ENCODE measurements at regions of chr17 and their contacts with region 1.

Region 1: GRCh38 chr17:39621523-39622379 is 5.0 kb upstream of the PPP1R1B start:
- DNase-seq: peak; percentile 80 to 97 (median 91)

Region 2: DNA sequence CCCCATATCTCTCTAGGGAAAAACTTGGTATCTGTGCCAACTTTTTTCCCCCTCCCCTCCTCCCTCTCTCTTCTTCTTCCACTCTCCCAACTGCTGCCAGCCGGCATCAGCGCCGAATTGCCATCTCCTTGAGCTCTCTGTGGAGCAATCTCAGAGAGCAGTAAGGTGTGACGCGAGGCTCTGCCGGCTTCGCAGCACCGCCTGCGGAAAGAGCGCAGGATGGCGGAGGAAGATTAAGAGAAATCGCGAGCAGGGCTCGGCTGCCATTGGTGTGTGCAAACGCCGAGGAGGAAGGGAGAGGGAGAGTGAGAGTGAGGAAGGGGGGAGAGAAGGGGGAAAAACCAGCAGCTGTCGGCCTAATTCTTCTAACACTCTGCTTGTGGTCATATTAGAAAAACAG is 58.3 kb before region 1 on chr17:
- intact Hi-C with region 1: no loop called
- DNase-seq: peak in 41 of 42 donors; percentile 24 to 85 (median 64)

Region 3: GRCh38 chr17:39668199-39668966 is 46.6 kb after region 1 on chr17 and contains the start of gene PNMT:
- intact Hi-C with region 1: loop called (anchors 5 kb)
- DNase-seq: peak in 39 of 42 donors; percentile 57 to 88 (median 76)

Region 4: DNA sequence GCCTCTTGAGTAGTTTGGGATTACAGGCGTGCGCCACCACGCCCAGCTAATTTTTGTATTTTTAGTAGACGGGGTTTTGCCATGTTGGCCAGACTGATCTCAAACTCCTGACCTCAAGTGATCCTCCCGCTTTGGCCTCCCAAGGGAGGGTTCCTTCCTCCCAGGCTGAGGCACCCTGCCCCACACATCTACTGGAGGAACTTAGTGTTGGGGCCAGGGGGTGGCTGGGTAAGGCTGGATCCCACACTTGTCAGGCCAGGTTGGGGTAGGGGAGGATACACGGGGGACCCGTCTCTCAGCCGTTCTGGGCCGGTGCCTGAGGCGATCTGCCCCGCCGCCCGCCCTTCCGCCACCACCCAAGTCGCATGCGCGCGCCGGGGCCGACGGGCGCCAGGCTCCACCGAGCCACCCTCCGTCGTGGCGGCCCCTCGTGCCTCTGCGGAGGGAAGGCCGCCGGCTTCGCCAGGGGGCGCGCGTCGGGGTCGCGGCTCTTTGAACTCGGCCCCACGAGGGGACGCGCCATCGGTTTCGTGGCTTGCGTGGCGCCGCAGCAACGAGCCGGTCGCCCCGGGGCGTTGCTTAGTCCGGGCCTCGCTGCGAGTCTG is 131.9 kb after region 1 on chr17:
- intact Hi-C with region 1: loop called (anchors 2 kb)
- DNase-seq: peak in 28 of 42 donors; percentile 23 to 71 (median 46)